ENCODE measurements at regions of chr5 and their contacts with region 1.

Region 1: GRCh38 chr5:32709781-32710549 is 1.2 kb upstream of the NPR3 start:
- DNase-seq: no peak
- H3K4me3 ChIP-seq: peak overlapping the region; percentile 58 to 71
- H3K27ac ChIP-seq: peak overlapping the region; percentile 5
- H3K4me1 ChIP-seq: peaks cover 30% of the 10 kb centered on the region
- H3K27me3 ChIP-seq: no peaks in the 10 kb centered on the region
- CTCF ChIP-seq: peak in 2 of 3 experiments; percentile 40 to 44
- POLR2A ChIP-seq: no peak

Region 2: DNA sequence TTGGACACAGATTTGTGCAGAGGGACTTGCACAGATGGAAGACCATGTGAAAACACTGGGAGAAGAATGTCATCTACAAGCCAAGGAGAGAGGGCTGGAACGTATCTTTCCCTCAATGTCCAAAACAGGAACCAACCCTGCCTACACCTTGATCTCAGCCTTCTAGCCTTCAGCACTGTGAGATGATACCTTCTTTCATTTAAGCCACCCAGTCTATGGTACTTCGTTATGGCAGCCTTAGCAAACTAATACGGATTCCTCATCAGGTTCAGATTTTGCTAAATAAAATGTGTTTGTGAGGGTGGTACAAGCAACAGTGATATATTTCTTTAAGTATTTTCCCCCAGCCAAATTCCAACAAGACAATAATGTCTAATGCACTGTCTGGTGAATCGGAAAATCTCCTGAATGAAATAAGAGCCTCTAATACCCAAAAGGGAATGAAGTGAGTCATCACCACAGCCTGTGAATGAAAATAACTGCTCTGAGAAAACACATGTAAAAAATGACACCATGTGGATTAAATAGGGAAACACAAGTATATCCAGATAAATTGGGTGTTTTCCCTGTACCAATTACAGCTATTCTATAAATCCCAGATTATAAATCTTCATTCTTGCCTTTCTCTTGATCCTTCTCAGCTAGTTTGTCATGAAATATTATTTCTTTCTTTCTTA is 548.0 kb after region 1 on chr5:
- intact Hi-C with region 1: loop called (anchors 10 kb)
- DNase-seq: no peak
- H3K4me3 ChIP-seq: no peak overlapping the region
- H3K27ac ChIP-seq: no peak overlapping the region
- H3K4me1 ChIP-seq: no peaks in the 10 kb centered on the region
- H3K27me3 ChIP-seq: no peaks in the 10 kb centered on the region
- CTCF ChIP-seq: peak in 1 of 3 experiments; percentile 9
- POLR2A ChIP-seq: no peak

Region 3: DNA sequence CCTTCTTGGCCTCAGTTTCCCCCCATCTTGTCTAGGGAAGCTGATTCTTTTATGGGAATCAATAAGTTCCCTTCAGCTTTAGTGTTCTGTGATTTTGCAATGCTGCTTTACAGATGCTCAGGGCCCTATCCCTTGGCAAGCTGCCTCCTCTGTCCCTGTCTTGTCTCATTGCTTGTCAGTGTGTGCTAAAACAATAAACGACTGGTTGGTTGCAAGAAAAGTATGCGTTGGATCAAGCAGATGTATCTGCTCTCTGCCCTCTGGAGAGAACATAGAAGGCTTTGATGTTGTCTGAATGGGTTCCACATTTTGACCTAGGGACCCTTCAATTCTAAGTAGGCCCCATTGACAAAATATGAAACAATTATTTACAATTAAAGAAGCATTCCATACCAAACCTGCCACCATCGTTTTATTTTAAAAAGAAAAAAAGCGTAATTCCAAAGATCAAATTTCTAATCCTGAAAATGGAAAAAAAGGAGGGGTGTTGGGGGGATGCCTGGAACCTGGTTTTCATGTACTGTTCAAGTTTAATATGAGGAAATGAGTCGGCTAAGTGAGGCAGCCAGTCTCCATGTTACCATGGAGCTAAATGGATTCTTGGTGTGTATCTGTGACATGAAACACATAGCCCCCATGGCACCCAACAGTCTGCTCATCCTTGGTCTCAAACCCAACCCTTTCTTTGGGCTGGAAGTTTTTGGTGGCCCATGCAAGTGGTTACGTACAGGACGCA is 699.6 kb after region 1 on chr5:
- intact Hi-C with region 1: loop called (anchors 10 kb)
- DNase-seq: no peak
- H3K4me3 ChIP-seq: no peak overlapping the region
- H3K27ac ChIP-seq: peak overlapping the region; percentile 3
- H3K4me1 ChIP-seq: no peaks in the 10 kb centered on the region
- H3K27me3 ChIP-seq: no peaks in the 10 kb centered on the region
- CTCF ChIP-seq: no peak
- POLR2A ChIP-seq: no peak

Measured in vagina (tissue), 2 donors.